Transverse colon (tissue), 4 donors: ENCODE measurements at regions of chrX and their contacts with region 1.

Region 1: DNA sequence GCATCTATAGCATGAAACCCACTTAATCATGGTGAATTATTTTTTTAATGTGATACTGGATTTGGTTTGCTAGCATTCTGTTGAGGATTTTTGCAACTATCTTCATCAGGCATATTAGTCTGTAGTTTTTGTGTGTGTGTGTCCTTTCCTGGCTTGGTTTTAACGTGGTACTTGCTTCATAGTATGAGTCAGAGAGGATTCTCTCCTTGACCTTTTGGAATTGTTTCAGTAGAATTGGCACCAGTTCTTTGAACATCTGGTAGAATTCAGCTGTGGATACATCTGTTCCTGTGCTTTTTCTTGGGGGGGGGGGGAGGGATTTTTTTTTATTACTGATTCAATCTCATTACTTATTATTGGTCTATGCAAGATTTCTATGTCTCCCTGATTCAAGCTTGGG is 232.0 kb upstream of the KLF8 start:
- DNase-seq: no peak
- H3K4me3 ChIP-seq: no peak overlapping the region
- H3K27ac ChIP-seq: no peak overlapping the region
- H3K4me1 ChIP-seq: no peaks in the 10 kb centered on the region
- H3K27me3 ChIP-seq: no peaks in the 10 kb centered on the region
- CTCF ChIP-seq: no peak
- EP300 ChIP-seq: no peak
- POLR2A ChIP-seq: no peak

Region 2: DNA sequence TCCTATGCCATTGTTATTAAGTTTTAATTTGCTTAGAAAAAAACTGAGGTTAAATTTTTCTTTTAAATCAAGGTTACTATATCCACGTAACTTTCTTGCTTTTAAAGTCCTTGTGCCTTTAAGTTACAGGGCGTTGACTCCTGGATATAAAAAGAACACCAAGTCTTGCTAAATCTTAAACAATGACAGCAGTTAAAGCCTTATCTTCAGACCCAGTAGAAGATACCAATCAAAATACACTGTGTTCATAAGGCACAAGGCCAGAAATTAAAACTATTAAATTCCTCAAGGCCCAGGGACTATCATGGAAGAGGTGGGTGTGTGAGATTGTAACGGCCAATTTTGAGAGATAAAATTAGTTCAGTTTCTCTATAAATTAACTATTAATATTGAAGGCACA is 850.9 kb before region 1 on chrX:
- in situ Hi-C with region 1: no loop called
- intact Hi-C with region 1: no loop called
- DNase-seq: no peak
- H3K4me3 ChIP-seq: no peak overlapping the region
- H3K27ac ChIP-seq: no peak overlapping the region
- H3K4me1 ChIP-seq: no peaks in the 10 kb centered on the region
- H3K27me3 ChIP-seq: no peaks in the 10 kb centered on the region
- CTCF ChIP-seq: no peak
- EP300 ChIP-seq: no peak
- POLR2A ChIP-seq: no peak

Region 3: DNA sequence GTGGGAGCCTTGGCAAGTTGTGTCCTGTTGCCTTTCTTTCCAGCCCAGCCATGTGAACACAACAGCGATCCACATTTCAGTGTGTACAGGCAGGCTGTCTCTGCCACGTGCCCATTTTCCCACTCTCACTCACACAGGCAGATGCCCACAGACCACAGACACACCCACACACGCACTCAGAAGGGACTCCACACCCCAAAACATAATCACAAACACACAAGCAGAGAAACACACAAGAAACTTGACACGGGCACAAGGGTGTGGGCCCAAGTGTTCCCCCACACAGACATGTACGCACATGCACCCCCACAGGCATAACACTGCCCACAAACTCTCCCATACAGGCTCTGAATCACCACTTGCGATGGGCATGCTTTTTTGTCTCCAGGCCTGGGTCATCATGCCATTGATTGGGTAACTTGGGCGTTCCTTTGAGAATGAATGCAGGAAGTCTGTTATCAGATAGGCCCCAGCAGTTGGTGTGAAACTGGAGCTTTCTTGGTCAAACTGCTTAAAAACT is 813.2 kb after region 1 on chrX:
- in situ Hi-C with region 1: no loop called
- intact Hi-C with region 1: no loop called
- DNase-seq: no peak
- H3K4me3 ChIP-seq: no peak overlapping the region
- H3K27ac ChIP-seq: peak overlapping the region in 2 of 4 donors; percentile 12 to 18
- H3K4me1 ChIP-seq: no peaks in the 10 kb centered on the region
- H3K27me3 ChIP-seq: no peaks in the 10 kb centered on the region
- CTCF ChIP-seq: no peak
- EP300 ChIP-seq: no peak
- POLR2A ChIP-seq: no peak

Region 4: GRCh38 chrX:56963377-56963776 is 963.2 kb after region 1 on chrX:
- in situ Hi-C with region 1: no loop called
- intact Hi-C with region 1: loop called (anchors 5 kb)
- DNase-seq: no peak
- H3K4me3 ChIP-seq: no peak overlapping the region
- H3K27ac ChIP-seq: no peak overlapping the region
- H3K4me1 ChIP-seq: no peaks in the 10 kb centered on the region
- H3K27me3 ChIP-seq: no peaks in the 10 kb centered on the region
- CTCF ChIP-seq: no peak
- EP300 ChIP-seq: no peak
- POLR2A ChIP-seq: no peak